ENCODE measurements at regions of chr18 and their contacts with region 1.

Region 1: DNA sequence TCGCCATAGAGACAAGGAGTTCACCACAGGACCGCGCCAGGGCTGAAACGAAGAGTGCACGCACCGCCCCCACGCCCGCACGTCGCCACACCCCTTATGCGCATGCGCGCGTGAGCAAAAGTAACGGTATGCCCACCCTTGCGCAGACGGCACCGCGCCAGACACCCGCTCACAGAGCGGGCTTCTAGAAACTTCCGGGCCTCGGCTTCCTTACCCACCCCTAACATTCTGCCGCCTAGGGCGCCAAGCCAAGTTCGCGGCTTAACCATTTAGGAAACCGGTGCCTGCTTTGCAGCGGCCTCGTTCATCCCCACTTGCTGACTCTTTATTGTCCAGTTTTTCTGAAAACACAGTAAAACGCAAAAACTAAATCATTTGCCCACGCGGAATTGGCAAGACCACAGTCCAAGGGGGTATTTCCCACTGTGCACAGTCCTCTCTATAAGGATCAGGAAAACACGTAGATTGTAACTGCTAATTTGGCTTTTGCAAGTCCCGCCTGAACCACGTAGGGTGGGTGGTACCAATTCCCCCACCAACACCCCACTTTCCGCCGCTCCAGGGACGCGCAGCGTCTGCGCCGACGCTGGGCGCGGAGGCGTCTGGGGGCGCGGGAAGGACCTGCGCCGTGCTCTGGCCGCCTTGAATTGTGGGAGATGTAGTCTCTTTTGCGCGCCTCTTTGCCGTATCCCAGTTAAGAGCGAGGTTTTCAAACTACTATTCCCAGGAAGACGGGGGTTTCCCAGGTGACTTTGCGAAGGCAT is at the starts of genes FBXO15 and TIMM21:
- DNase-seq: peak; percentile 99
- H3K4me3 ChIP-seq: peak within 1 kb of the TSS; percentile 79 to 95 (median 85)
- H3K27ac ChIP-seq: peak within 1 kb of the TSS; percentile 47
- H3K4me1 ChIP-seq: peaks cover 17% of the 10 kb centered on the region
- H3K27me3 ChIP-seq: no peaks in the 10 kb centered on the region
- CTCF ChIP-seq: no peak
- POLR2A ChIP-seq: peak; percentile 81
- total RNA-seq, gene FBXO15: not detected in 2 replicates
- total RNA-seq, gene TIMM21: 36.7 and 38.9 TPM in 2 replicates

Region 2: GRCh38 chr18:74597662-74598349 is 449.8 kb after region 1 on chr18 and contains the start of gene ZNF407:
- CTCF ChIA-PET with region 1: no interaction called
- POLR2A ChIA-PET with region 1: no interaction called
- dilution Hi-C with region 1: no loop called
- intact Hi-C with region 1: loop called (anchors 2 kb)
- DNase-seq: peak; percentile 91
- H3K4me3 ChIP-seq: peak within 1 kb of the TSS; percentile 88 to 98 (median 97)
- H3K27ac ChIP-seq: peak within 1 kb of the TSS; percentile 99
- H3K4me1 ChIP-seq: peaks cover 15% of the 10 kb centered on the region
- H3K27me3 ChIP-seq: no peaks in the 10 kb centered on the region
- CTCF ChIP-seq: no peak
- POLR2A ChIP-seq: peak; percentile 6
- total RNA-seq, gene ZNF407: 17.3 and 20.1 TPM in 2 replicates

Region 3: DNA sequence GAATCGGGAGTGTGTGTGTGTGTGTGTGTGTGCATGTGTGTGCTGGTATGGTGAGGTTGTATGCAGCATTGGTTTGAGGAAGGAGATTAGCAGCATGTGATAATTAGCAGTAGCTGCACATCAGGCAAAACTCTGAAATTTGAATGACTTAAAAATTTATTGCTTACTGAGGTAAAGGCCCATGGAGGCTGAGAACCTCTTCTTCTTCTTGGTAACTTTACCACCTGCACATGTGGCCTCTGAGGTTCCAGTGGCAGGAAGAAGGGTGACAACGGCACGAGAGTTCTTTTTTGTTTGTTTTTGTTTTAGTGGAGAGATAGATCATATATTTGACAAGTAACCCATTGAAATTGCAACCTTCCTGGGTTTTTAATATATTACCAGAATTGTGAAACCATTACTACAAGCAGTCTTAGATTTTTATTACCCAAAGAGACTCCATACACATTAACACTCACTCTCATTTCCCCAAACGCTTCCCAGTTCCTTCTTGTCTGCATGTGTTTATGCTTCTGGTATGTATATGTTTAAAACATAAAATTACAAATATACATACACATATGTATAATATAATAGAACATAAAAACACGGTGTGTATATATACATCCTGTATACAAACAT is 768.9 kb after region 1 on chr18:
- CTCF ChIA-PET with region 1: no interaction called
- POLR2A ChIA-PET with region 1: no interaction called
- dilution Hi-C with region 1: no loop called
- intact Hi-C with region 1: no loop called
- DNase-seq: no peak
- H3K4me3 ChIP-seq: no peak overlapping the region
- H3K27ac ChIP-seq: no peak overlapping the region
- H3K4me1 ChIP-seq: no peaks in the 10 kb centered on the region
- H3K27me3 ChIP-seq: no peaks in the 10 kb centered on the region
- CTCF ChIP-seq: no peak
- POLR2A ChIP-seq: no peak

Measured in endothelial cell of umbilical vein (primary cell).